CD8-positive, alpha-beta memory T cell (primary cell): ENCODE measurements at regions of chr6 and their contacts with region 1.

Region 1: DNA sequence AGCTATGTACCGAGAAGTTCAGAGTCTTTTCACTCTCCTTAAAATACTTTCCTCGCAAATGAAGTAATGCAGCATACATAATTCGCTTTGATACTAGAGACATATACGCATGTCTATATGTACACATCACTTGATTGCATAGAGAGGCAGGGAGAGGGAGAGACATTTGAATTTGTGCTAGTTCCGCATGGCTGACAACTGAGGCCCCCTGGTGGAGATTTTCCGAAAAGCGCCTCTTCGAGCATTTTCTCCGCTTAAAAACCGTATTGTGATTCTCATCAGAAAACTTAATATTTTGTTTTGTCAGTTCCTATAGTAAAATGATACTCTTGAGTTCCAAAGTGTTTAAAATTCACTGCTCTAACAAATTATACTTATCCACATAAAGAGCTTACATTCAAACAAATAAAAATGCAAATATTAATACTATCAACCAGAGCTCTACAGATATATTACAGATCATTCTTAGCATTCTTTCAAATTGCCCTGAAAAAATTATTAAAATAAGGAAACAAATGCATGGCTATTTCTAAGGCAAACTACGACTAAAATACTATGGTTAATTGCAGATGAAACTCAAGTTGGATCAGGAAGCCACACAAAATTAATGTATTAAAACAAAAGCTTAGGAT is 637 bp downstream of the MYLK4 start:
- DNase-seq: peak; percentile 45 to 71 (median 53)
- H3K4me3 ChIP-seq: no peak overlapping the region
- H3K4me3 Mint-ChIP-seq: no peak overlapping the region
- H3K27ac ChIP-seq: no peak overlapping the region
- H3K27ac Mint-ChIP-seq: no peak overlapping the region
- H3K4me1 ChIP-seq: no peaks in the 10 kb centered on the region
- H3K4me1 Mint-ChIP-seq: peaks cover 5 to 8% (median 8%) of the 10 kb centered on the region in 3 donors
- H3K27me3 ChIP-seq: no peaks in the 10 kb centered on the region
- H3K27me3 Mint-ChIP-seq: peaks cover 10 to 29% of the 10 kb centered on the region in 2 donors

Region 2: GRCh38 chr6:1596088-1596852 is 1153.8 kb before region 1 on chr6:
- CTCF ChIA-PET with region 1: interaction called, 17 read pairs
- POLR2A ChIA-PET with region 1: no interaction called
- DNase-seq: peak; percentile 43 to 71 (median 59)
- H3K4me3 ChIP-seq: no peak overlapping the region
- H3K4me3 Mint-ChIP-seq: no peak overlapping the region
- H3K27ac ChIP-seq: no peak overlapping the region
- H3K27ac Mint-ChIP-seq: peak overlapping the region in 1 of 8 donors; percentile 7
- H3K4me1 ChIP-seq: peaks cover 7% of the 10 kb centered on the region
- H3K4me1 Mint-ChIP-seq: peaks cover 3 to 8% (median 7%) of the 10 kb centered on the region in 3 donors
- H3K27me3 ChIP-seq: peaks cover 47% of the 10 kb centered on the region
- H3K27me3 Mint-ChIP-seq: peaks cover 45 to 71% of the 10 kb centered on the region in 2 donors

Region 3: GRCh38 chr6:2738373-2738979 is 11.6 kb before region 1 on chr6:
- CTCF ChIA-PET with region 1: interaction called, 31 read pairs
- POLR2A ChIA-PET with region 1: interaction called, 3 read pairs
- DNase-seq: peak; percentile 16 to 65 (median 40)
- H3K4me3 ChIP-seq: no peak overlapping the region
- H3K4me3 Mint-ChIP-seq: no peak overlapping the region
- H3K27ac ChIP-seq: no peak overlapping the region
- H3K27ac Mint-ChIP-seq: no peak overlapping the region
- H3K4me1 ChIP-seq: no peaks in the 10 kb centered on the region
- H3K4me1 Mint-ChIP-seq: peaks cover 0 to 3% (median 0%) of the 10 kb centered on the region in 3 donors
- H3K27me3 ChIP-seq: no peaks in the 10 kb centered on the region
- H3K27me3 Mint-ChIP-seq: peaks cover 3 to 4% of the 10 kb centered on the region in 2 donors

Region 4: DNA sequence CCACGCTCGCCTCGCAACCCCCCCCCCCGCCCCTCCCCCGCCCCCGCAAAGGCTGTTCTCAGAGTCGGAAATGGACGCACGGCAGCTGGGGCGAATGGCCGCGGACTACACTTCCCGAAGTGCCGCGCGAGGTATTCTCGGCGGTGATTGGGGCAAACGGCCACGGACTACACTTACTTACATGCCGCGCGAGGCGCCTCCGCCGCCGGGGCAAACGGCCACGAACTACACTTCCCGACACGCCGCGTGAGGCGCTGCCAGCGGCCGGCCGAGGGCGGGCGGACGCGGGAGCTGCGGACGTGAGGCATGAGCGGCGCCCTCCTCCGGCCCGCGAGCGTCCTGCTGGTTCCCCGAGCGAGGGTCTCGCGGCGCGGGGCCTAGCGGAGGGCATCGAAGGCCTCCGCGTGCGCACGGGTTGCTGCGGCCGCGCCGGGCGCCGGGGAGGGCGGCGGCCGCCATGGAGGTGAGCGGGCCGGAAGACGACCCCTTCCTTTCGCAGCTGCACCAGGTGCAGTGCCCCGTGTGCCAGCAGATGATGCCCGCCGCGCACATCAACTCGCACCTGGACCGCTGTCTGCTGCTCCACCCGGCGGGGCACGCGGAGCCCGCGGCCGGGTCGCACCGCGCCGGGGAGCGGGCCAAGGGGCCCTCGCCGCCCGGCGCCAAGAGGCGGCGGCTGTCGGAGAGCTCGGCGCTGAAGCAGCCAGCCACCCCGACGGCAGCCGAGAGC is 15.2 kb after region 1 on chr6 and contains the start of gene WRNIP1:
- CTCF ChIA-PET with region 1: interaction called, 19 read pairs
- POLR2A ChIA-PET with region 1: no interaction called
- DNase-seq: peak; percentile 92 to 99 (median 96)
- H3K4me3 ChIP-seq: peak within 1 kb of the TSS; percentile 85
- H3K4me3 Mint-ChIP-seq: peak within 1 kb of the TSS; percentile 90 to 98 (median 93)
- H3K27ac ChIP-seq: peak within 1 kb of the TSS; percentile 96
- H3K27ac Mint-ChIP-seq: peak within 1 kb of the TSS; percentile 96 to 100 (median 99)
- H3K4me1 ChIP-seq: peaks cover 34% of the 10 kb centered on the region
- H3K4me1 Mint-ChIP-seq: peaks cover 54 to 61% (median 59%) of the 10 kb centered on the region in 3 donors
- H3K27me3 ChIP-seq: no peaks in the 10 kb centered on the region
- H3K27me3 Mint-ChIP-seq: no peaks in the 10 kb centered on the region
- total RNA-seq, gene WRNIP1: 58.5 to 58.7 TPM

Region 5: GRCh38 chr6:2780102-2780737 is 30.1 kb after region 1 on chr6:
- CTCF ChIA-PET with region 1: no interaction called
- POLR2A ChIA-PET with region 1: no interaction called
- DNase-seq: no peak
- H3K4me3 ChIP-seq: no peak overlapping the region
- H3K4me3 Mint-ChIP-seq: no peak overlapping the region
- H3K27ac ChIP-seq: no peak overlapping the region
- H3K27ac Mint-ChIP-seq: no peak overlapping the region
- H3K4me1 ChIP-seq: no peaks in the 10 kb centered on the region
- H3K4me1 Mint-ChIP-seq: peaks cover 28 to 50% (median 41%) of the 10 kb centered on the region in 3 donors
- H3K27me3 ChIP-seq: no peaks in the 10 kb centered on the region
- H3K27me3 Mint-ChIP-seq: no peaks in the 10 kb centered on the region

Region 6: DNA sequence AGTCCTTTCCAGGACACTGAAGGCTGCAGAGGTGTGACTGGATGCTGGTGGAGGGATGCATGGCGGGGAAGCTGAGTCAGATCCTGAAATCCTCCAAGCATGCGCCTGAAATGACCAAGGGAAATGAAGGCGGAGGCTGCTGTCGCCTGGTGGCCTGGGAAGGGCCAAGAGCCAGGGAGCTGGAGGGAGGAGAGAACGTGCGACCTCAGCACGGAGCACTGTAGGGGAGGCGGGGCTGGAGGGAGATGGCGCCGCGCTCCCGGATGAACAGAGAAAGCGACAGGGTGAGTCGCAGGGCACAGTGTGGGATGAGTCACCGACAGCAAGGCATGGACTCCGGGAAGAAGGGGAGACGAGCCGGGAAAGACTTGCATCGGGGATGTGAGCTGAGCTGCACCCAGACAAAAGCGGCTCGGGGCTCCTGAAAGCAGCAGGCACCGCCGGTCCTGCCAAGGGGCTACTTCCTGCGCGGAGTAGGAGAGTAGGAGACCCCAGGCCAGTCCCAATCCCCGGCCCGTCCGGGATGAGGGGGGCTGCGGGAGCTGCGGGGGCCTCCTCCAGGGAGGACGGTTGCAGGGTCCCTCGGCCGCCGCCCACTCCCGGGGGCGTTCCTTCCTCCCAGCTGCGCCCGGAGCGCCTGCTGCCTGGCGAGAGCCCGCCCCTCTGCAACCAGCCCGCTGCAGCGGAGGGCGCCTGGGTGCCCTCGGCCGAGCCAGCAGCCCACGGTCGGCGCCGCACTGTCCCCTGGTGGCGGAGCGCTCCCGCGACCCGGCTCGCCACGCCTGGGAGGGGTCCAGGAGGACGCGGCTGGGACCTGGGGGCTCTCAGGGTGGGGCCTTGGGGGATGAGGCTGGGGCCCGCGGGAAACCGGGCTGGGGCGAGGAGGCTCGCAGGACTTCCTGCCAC is 238.6 kb after region 1 on chr6:
- CTCF ChIA-PET with region 1: no interaction called
- POLR2A ChIA-PET with region 1: no interaction called
- DNase-seq: peak; percentile 71 to 86 (median 77)
- H3K4me3 ChIP-seq: peak overlapping the region; percentile 78
- H3K4me3 Mint-ChIP-seq: peak overlapping the region; percentile 87 to 97 (median 96)
- H3K27ac ChIP-seq: peak overlapping the region; percentile 98
- H3K27ac Mint-ChIP-seq: peak overlapping the region; percentile 98 to 100 (median 99)
- H3K4me1 ChIP-seq: peaks cover 23% of the 10 kb centered on the region
- H3K4me1 Mint-ChIP-seq: peaks cover 27 to 38% (median 31%) of the 10 kb centered on the region in 3 donors
- H3K27me3 ChIP-seq: no peaks in the 10 kb centered on the region
- H3K27me3 Mint-ChIP-seq: no peaks in the 10 kb centered on the region